ENCODE measurements at regions of chr12 and their contacts with region 1.

Region 1: DNA sequence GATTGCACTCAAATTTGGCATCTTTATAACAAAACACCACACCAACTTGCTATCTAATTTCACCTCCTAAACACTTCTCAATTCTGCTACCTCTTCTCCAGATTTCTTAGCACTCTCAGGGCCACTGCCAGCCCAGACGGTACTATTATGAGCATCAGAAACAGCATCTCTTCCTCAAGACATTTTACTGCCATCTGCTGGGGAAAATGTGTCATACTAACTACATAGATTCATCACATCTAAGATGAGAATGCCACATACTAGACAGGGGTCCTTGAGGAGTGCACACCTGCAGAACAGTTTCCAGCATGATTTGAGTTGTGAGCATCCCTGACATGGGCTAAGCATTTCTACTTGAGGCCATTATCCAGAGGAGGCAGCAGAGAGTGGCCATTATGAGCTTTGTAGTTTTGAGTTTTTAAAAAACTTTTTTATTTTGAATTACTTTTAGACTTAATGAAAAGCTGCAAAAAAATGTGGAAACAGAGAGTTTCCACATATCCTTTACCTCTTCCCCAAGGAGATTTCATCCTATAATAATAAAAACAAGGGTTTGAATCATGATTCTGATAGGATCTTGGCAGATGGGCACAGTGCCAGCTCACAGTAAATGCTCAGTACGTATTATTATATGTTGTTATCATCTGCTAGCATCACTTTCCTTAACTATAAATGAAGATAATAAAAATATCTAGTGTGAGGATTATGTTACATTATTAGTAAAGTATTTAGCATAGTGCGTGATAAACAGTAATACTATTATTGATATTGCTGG is 15.2 kb upstream of the GRIP1 start:
- DNase-seq: peak; percentile 52
- ATAC-seq: peak; percentile 95
- H3K4me3 ChIP-seq: no peak overlapping the region
- H3K27ac ChIP-seq: no peak overlapping the region
- H3K4me1 ChIP-seq: no peaks in the 10 kb centered on the region
- H3K27me3 ChIP-seq: peaks cover 20% of the 10 kb centered on the region; the same call in 1 of the 2 replicates
- CTCF ChIP-seq: peak; percentile 36 to 63 (median 40); a peak in 4 of 6 replicates
- POLR2A ChIP-seq: no peak
- RAD21 ChIP-seq: peak; percentile 60

Region 2: DNA sequence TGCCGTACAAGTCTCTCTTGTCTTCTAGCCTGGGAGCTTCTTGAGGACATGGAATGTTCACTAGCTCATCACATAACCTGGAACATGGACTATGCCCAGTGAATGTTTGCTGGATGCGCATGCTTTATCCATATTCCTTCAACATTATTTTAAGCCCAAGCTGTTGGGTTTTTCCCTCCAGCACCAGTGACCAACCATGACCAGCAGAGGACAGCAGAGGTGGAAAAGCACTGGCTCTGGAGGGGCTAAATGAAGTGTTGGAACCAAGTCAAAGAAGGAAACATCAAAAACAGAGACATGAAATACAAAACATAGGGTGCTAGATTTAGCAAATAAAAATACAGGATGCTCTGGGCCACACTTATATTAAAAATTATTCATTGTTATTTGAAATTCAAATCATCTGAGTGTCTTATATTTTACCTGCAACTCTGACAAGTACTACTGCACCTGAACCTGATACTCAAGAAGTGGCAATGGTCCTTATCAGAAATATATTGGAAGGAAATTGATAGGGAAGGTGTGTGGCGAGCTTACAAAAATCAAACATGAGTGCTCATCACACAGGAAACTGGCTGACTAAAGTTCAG is 414.9 kb before region 1 on chr12:
- CTCF ChIA-PET with region 1: no interaction called
- POLR2A ChIA-PET with region 1: no interaction called
- RAD21 ChIA-PET with region 1: no interaction called
- intact Hi-C with region 1: loop called (anchors 5 kb)
- DNase-seq: peak; percentile 33
- ATAC-seq: peak; percentile 92
- H3K4me3 ChIP-seq: no peak overlapping the region
- H3K27ac ChIP-seq: no peak overlapping the region
- H3K4me1 ChIP-seq: no peaks in the 10 kb centered on the region
- H3K27me3 ChIP-seq: 0 out of 2 replicates have a peak, but pooled peaks cover 4% of the 10 kb centered on the region
- CTCF ChIP-seq: peak; percentile 81 to 90 (median 89)
- POLR2A ChIP-seq: no peak
- RAD21 ChIP-seq: peak; percentile 74

Region 3: DNA sequence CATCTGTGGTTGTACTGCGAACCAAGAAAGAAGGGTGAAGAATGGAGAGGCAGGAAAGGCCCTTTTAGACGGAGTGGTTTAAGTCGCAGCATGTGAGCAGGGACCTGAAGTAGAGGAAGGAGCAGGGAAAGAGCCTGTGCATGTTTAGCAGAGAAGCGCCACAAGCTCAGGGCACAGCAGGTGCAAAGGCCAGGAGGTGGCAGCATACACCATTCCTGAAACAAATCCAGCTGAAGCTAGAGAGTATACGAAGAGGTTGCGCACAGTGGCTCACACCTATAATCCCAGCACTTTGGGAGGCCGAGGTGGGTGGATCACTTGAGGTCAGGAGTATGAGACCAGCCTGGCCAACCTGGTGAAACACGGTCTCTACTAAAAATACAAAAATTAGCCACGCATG is 341.9 kb before region 1 on chr12:
- CTCF ChIA-PET with region 1: interaction called, 4 read pairs
- POLR2A ChIA-PET with region 1: no interaction called
- RAD21 ChIA-PET with region 1: no interaction called
- intact Hi-C with region 1: loop called (anchors 10 kb)
- DNase-seq: peak; percentile 19
- ATAC-seq: peak; percentile 93
- H3K4me3 ChIP-seq: no peak overlapping the region
- H3K27ac ChIP-seq: no peak overlapping the region
- H3K4me1 ChIP-seq: no peaks in the 10 kb centered on the region
- H3K27me3 ChIP-seq: no peaks in the 10 kb centered on the region
- CTCF ChIP-seq: peak; percentile 52 to 66 (median 63); a peak in 5 of 6 replicates
- POLR2A ChIP-seq: no peak
- RAD21 ChIP-seq: peak; percentile 60